ENCODE measurements at regions of chr17 and their contacts with region 1.

Region 1: DNA sequence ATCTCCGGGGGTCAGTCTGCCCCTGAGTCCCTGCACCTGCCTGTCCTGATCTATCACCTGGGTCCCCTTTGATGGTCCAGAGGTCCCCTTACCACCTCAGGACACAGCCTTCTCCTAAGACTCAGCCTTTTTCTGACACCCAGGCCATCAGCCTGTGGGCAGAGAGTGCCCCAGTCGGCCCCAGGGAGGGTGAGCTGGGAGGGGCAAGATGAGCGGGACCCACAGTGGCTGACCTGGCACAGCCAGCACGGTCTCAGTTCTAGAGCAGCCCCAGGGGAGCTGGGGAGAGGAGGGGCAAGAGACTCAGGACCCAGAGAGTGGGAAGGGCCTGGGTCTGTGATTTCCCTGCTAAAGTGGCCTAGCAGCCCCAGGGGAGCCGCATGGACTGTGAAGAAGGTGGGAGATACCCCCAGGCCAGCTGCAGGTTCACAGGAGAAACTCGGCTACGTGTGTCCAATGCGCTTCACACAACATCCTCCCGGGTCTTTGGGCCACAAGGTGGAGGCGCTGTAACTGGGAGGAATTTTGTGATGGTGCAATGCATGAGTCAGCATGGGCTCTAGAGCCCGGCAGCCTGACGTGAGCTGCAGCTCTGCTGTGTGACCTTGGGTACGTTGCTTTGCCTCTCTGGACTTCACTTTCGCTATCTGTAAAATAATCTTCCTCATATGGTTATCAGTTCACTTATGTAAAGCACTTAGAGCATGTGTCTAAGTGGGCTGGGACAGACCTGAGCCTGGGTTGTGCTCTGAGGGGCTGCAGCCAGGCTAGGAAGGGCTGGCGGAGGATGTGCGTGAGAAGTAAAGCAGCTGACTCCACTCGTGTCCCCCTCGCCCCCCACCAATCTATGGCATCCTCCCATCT is 67.2 kb upstream of the LHX1 start:
- DNase-seq: no peak
- ATAC-seq: no peak
- H3K4me3 ChIP-seq: no peak overlapping the region
- H3K27ac ChIP-seq: no peak overlapping the region
- H3K4me1 ChIP-seq: no peaks in the 10 kb centered on the region
- H3K27me3 ChIP-seq: peaks cover 0 to 69% (median 9%) of the 10 kb centered on the region in 9 donors
- CTCF ChIP-seq: no peak
- POLR2A ChIP-seq: no peak

Region 2: GRCh38 chr17:36812762-36813161 is 57.3 kb before region 1 on chr17:
- intact Hi-C with region 1: no loop called
- DNase-seq: no peak
- ATAC-seq: no peak
- H3K4me3 ChIP-seq: no peak overlapping the region
- H3K27ac ChIP-seq: no peak overlapping the region
- H3K4me1 ChIP-seq: peaks cover 0 to 8% (median 0%) of the 10 kb centered on the region in 12 donors
- H3K27me3 ChIP-seq: peaks cover 20 to 97% (median 63%) of the 10 kb centered on the region in 9 donors
- CTCF ChIP-seq: no peak
- POLR2A ChIP-seq: no peak

Region 3: DNA sequence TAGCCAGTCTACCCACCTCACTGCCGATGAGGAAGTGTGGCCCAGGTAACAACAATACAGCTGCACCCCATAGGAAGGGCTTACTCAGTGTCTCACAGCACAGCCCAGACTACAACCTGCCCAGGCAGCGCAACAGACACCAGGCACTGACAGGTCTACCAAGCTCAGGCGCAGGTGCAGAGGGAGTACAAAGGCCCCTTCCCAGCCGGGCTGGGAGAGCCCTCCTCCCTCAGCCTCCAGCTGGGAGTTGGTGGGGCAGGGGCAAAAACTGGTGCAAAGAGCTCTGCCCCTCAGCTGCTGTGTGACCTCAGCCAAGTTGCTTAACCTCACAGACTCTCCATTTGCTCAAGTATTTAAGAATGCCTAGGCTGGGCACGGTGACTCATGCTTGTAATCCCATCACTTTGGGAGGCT is 45.4 kb before region 1 on chr17:
- intact Hi-C with region 1: loop called in 1 of 10 experiments (anchors 5 kb)
- DNase-seq: no peak
- ATAC-seq: no peak
- H3K4me3 ChIP-seq: no peak overlapping the region
- H3K27ac ChIP-seq: no peak overlapping the region
- H3K4me1 ChIP-seq: no peaks in the 10 kb centered on the region
- H3K27me3 ChIP-seq: peaks cover 0 to 80% (median 32%) of the 10 kb centered on the region in 9 donors
- CTCF ChIP-seq: no peak
- POLR2A ChIP-seq: no peak

Region 4: DNA sequence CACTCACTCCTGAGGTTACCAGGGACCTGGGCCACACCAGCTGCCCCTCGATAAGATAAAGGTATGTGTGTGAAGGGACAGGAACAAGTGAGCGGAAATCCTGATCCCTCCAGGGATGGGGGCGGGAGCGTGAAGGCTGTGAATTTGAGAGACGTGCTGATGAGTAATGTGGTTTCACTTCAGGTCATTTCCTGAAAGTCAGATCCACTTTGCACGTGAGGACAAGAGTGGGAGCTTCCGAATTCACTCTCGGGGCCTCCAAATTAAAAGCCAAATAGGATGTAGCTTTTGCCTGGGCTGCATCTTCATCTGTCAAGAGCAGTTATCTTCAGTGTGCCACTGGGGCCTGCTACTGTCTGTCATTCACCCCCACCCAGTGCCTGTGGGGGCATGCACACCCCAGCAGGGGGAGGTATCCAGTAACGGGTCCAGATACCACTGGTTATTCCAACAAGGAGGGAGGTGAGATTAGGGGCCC is 20.2 kb before region 1 on chr17:
- intact Hi-C with region 1: no loop called
- DNase-seq: no peak
- ATAC-seq: no peak
- H3K4me3 ChIP-seq: no peak overlapping the region
- H3K27ac ChIP-seq: no peak overlapping the region
- H3K4me1 ChIP-seq: no peaks in the 10 kb centered on the region
- H3K27me3 ChIP-seq: peaks cover 0 to 56% (median 22%) of the 10 kb centered on the region in 9 donors
- CTCF ChIP-seq: no peak
- POLR2A ChIP-seq: no peak

Region 5: GRCh38 chr17:36931697-36932382 is 61.8 kb after region 1 on chr17:
- intact Hi-C with region 1: no loop called
- DNase-seq: no peak
- ATAC-seq: no peak
- H3K4me3 ChIP-seq: peak overlapping the region in 6 of 12 donors; percentile 4 to 42 (median 21)
- H3K27ac ChIP-seq: no peak overlapping the region
- H3K4me1 ChIP-seq: peaks cover 6 to 63% (median 44%) of the 10 kb centered on the region in 12 donors
- H3K27me3 ChIP-seq: peaks cover 84 to 100% (median 95%) of the 10 kb centered on the region in 9 donors
- CTCF ChIP-seq: no peak
- POLR2A ChIP-seq: no peak

Region 6: DNA sequence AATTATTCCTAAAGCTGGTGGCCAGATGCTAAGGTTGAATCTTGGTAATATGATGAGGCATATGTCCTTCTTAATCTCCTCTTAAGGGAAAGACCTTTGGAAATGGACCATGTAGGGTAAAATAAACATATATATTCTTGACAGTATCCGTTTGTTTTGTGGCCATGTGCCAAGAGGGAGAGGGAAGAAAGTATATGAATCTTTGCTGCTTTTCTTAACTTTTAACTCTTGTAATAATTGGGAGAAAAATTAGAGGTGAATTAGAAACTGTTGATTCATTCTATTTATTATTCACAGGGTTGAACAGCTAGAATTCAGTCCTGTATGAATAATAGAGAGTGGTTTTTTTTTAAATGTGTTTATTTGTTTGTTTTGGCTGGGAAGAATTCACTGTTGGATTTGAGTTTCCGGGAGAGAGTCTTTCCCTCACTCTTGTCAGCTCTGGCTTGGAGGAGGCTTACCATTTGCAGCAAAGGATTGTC is 110.2 kb after region 1 on chr17:
- intact Hi-C with region 1: no loop called
- DNase-seq: no peak
- ATAC-seq: peak in 1 of 4 donors; percentile 46
- H3K4me3 ChIP-seq: no peak overlapping the region
- H3K27ac ChIP-seq: no peak overlapping the region
- H3K4me1 ChIP-seq: peaks cover 0 to 17% (median 6%) of the 10 kb centered on the region in 12 donors
- H3K27me3 ChIP-seq: no peaks in the 10 kb centered on the region
- CTCF ChIP-seq: no peak
- POLR2A ChIP-seq: no peak

Region 7: GRCh38 chr17:37047631-37048104 is 177.6 kb after region 1 on chr17:
- intact Hi-C with region 1: loop called in 1 of 10 experiments (anchors 5 kb)
- DNase-seq: peak; percentile 64 to 82 (median 72)
- ATAC-seq: peak in 3 of 4 donors; percentile 60 to 75 (median 70)
- H3K4me3 ChIP-seq: no peak overlapping the region
- H3K27ac ChIP-seq: no peak overlapping the region
- H3K4me1 ChIP-seq: no peaks in the 10 kb centered on the region
- H3K27me3 ChIP-seq: no peaks in the 10 kb centered on the region
- CTCF ChIP-seq: peak; percentile 76 to 91 (median 84)
- POLR2A ChIP-seq: no peak